HepG2 (cell line): ENCODE measurements at regions of chr6 and their contacts with region 1.

Region 1: GRCh38 chr6:3887150-3887700 is 38.1 kb downstream of the FAM50B start:
- DNase-seq: peak; percentile 57
- ATAC-seq: peak; percentile 79
- H3K4me3 ChIP-seq: no peak overlapping the region
- H3K27ac ChIP-seq: peak overlapping the region; percentile 7
- H3K4me1 ChIP-seq: peaks cover 78% of the 10 kb centered on the region
- H3K27me3 ChIP-seq: no peaks in the 10 kb centered on the region
- CTCF ChIP-seq: peak; percentile 79
- EP300 ChIP-seq: no peak
- POLR2A ChIP-seq: no peak
- RAD21 ChIP-seq: no peak; the same call in 1 of the 2 replicates

Region 2: GRCh38 chr6:3742426-3743344 is 144.5 kb before region 1 on chr6:
- CTCF ChIA-PET with region 1: interaction called, 9 read pairs
- POLR2A ChIA-PET with region 1: no interaction called
- in situ Hi-C with region 1: loop called (anchors 5 kb)
- intact Hi-C with region 1: loop called (anchors 2 kb)
- DNase-seq: peak; percentile 78
- ATAC-seq: peak; percentile 85
- H3K4me3 ChIP-seq: peak overlapping the region; percentile 39 to 60 (median 51)
- H3K27ac ChIP-seq: peak overlapping the region; percentile 57
- H3K4me1 ChIP-seq: peaks cover 70% of the 10 kb centered on the region
- H3K27me3 ChIP-seq: no peaks in the 10 kb centered on the region
- CTCF ChIP-seq: peak; percentile 98
- EP300 ChIP-seq: 0 out of 4 replicates have a peak, but pooled peaks of 1 of the 2 experiments have one; percentile 32
- POLR2A ChIP-seq: no peak
- RAD21 ChIP-seq: peak; percentile 97

Region 3: GRCh38 chr6:3835055-3835731 is 52.0 kb before region 1 on chr6:
- CTCF ChIA-PET with region 1: interaction called, 3 read pairs
- POLR2A ChIA-PET with region 1: interaction called, 12 read pairs
- in situ Hi-C with region 1: no loop called
- intact Hi-C with region 1: loop called (anchors 2 kb)
- DNase-seq: peak; percentile 91
- ATAC-seq: peak; percentile 57
- H3K4me3 ChIP-seq: no peak overlapping the region
- H3K27ac ChIP-seq: peak overlapping the region; percentile 67
- H3K4me1 ChIP-seq: peaks cover 55% of the 10 kb centered on the region
- H3K27me3 ChIP-seq: no peaks in the 10 kb centered on the region
- CTCF ChIP-seq: peak; percentile 75
- EP300 ChIP-seq: peak; percentile 88 to 91
- POLR2A ChIP-seq: no peak
- RAD21 ChIP-seq: peak; percentile 85

Region 4: GRCh38 chr6:3929281-3929798 is 42.1 kb after region 1 on chr6:
- CTCF ChIA-PET with region 1: interaction called, 60 read pairs
- POLR2A ChIA-PET with region 1: interaction called, 14 read pairs
- in situ Hi-C with region 1: no loop called
- intact Hi-C with region 1: loop called (anchors 1 kb)
- DNase-seq: no peak
- ATAC-seq: no peak
- H3K4me3 ChIP-seq: no peak overlapping the region
- H3K27ac ChIP-seq: no peak overlapping the region
- H3K4me1 ChIP-seq: peaks cover 16% of the 10 kb centered on the region
- H3K27me3 ChIP-seq: no peaks in the 10 kb centered on the region
- CTCF ChIP-seq: no peak
- EP300 ChIP-seq: no peak
- POLR2A ChIP-seq: no peak
- RAD21 ChIP-seq: no peak

Region 5: DNA sequence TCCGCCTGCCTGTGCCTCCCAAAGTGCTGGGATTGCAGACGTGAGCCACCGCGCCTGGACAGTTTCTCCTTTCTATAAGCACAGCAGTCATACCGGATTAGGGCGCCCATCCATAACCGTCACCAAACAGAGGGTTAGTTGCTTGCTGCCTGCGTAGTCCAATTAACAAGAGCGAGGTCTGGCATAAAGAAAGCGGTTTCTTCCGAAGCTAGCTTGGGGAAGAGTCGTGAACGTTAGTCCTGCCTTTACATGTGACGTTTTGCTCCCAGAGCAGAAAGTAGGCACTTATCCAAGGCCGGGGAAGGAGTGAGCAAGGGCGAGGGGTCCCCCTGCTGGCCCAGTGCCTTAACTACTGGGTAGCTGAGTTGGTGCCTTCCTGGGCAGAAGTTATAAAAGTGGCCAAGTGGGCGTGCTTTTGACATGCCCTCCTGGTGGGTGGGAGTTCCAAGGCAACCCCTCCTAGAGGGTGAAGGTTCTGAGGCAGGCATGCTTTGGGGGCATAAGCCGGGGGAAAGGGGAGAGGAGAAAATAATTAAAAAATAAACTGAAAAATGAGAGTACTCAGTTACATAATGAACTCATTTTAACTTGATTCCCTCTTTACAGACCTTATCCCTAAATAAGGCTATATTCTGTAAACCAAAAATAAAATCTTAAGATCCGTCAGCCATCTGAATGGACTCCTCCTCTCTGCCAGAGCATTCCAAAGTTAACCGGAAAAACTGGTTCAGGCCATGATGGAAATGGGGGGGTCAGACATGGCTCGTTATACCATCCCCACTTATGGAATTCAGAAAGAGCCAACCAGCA is 103.7 kb after region 1 on chr6:
- CTCF ChIA-PET with region 1: interaction called, 12 read pairs
- POLR2A ChIA-PET with region 1: no interaction called
- in situ Hi-C with region 1: no loop called
- intact Hi-C with region 1: no loop called
- DNase-seq: peak; percentile 77
- ATAC-seq: peak; percentile 98
- H3K4me3 ChIP-seq: peak overlapping the region in 1 of 3 experiments; percentile 52; a peak in 2 of 6 replicates
- H3K27ac ChIP-seq: no peak overlapping the region
- H3K4me1 ChIP-seq: peaks cover 20% of the 10 kb centered on the region
- H3K27me3 ChIP-seq: no peaks in the 10 kb centered on the region
- CTCF ChIP-seq: peak; percentile 99
- EP300 ChIP-seq: no peak
- POLR2A ChIP-seq: no peak
- RAD21 ChIP-seq: peak; percentile 96